ENCODE measurements at regions of chr5 and their contacts with region 1.

Region 1: GRCh38 chr5:125412561-125413495 is 666.4 kb upstream of the ZNF608 start:
- DNase-seq: peak; percentile 35
- CTCF ChIP-seq: peak; percentile 41

Region 2: DNA sequence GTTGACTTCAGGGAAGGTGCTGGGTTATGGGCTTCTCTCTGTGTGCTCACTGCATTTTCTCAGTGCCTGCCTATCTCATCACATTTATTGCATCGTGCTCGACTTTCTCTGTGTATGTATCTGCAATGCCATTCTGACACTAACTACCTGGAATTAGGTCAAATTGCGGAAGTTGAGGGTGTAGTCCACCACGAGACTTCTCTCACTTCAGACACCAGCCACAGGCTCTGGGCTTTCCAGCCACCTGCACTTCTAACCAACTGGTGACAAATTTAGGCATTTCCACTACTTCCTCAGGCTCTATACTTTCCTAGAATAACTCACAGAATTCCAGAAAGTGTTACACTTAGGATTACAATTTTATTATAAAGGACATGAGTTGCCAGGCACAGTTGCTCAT is 477.8 kb before region 1 on chr5:
- in situ Hi-C with region 1: loop called (anchors 25 kb)
- DNase-seq: peak; percentile 42
- CTCF ChIP-seq: no peak

Measured in GM13977 (cell line).